HepG2 (cell line): ENCODE measurements at regions of chr14 and their contacts with region 1.

Region 1: GRCh38 chr14:36647824-36648753 is 13.6 kb upstream of the PAX9 start:
- DNase-seq: peak; percentile 61
- ATAC-seq: peak; percentile 97
- H3K4me3 ChIP-seq: peak overlapping the region; percentile 2 to 68 (median 8); a peak in 4 of 6 replicates
- H3K27ac ChIP-seq: no peak overlapping the region
- H3K4me1 ChIP-seq: peaks cover 12% of the 10 kb centered on the region
- H3K27me3 ChIP-seq: peaks cover 12 to 44% of the 10 kb centered on the region in 2 experiments
- CTCF ChIP-seq: peak; percentile 97
- EP300 ChIP-seq: no peak
- POLR2A ChIP-seq: no peak
- RAD21 ChIP-seq: peak; percentile 86

Region 2: GRCh38 chr14:36616736-36617135 is 31.4 kb before region 1 on chr14:
- CTCF ChIA-PET with region 1: no interaction called
- POLR2A ChIA-PET with region 1: no interaction called
- in situ Hi-C with region 1: no loop called
- intact Hi-C with region 1: no loop called
- DNase-seq: no peak
- ATAC-seq: peak; percentile 32; the same call in 1 of the 3 replicates
- H3K4me3 ChIP-seq: no peak overlapping the region
- H3K27ac ChIP-seq: no peak overlapping the region
- H3K4me1 ChIP-seq: no peaks in the 10 kb centered on the region; the same call in 1 of the 2 replicates
- H3K27me3 ChIP-seq: no peaks in the 10 kb centered on the region
- CTCF ChIP-seq: no peak
- EP300 ChIP-seq: no peak
- POLR2A ChIP-seq: no peak
- RAD21 ChIP-seq: no peak

Region 3: DNA sequence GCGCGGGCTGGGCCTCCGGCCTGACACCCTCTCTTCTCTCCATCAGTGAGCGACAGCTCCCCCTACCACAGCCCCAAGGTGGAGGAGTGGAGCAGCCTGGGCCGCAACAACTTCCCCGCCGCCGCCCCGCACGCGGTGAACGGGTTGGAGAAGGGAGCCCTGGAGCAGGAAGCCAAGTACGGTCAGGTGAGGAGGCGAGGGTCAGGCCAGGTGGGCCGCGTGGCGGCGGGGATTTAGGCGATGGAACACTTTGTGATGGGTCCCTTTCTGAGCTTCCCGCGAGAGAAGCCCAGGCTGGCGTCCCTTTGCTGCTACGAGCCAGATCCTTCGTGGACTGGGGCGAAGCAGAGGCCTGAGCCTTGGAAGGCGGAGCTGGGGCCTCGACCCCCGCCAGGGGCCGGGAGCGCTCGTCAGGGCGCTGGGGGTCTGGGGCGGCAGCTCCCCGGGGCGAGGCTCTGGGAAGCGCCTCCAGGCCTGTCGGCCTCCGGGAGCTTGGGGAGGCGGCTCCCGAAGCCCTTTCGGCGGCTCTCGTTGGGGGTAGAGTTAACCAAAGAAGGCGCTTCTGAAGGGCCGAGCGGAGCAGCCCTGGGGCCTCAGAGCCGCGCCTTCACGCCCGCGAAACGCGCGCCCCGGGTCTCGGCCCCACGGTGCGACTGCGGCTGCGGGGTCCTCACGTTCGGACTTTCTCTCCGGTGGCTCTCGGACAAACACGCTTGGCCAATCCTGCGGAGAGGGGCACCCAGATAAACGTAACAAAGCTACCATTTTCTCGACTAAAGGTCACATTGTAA is 18.5 kb after region 1 on chr14:
- CTCF ChIA-PET with region 1: no interaction called
- POLR2A ChIA-PET with region 1: no interaction called
- in situ Hi-C with region 1: no loop called
- intact Hi-C with region 1: no loop called
- DNase-seq: no peak
- ATAC-seq: peak; percentile 6; the same call in 2 of the 3 replicates
- H3K4me3 ChIP-seq: no peak overlapping the region
- H3K27ac ChIP-seq: no peak overlapping the region
- H3K4me1 ChIP-seq: no peaks in the 10 kb centered on the region
- H3K27me3 ChIP-seq: peaks cover 12 to 45% of the 10 kb centered on the region in 2 experiments
- CTCF ChIP-seq: no peak
- EP300 ChIP-seq: no peak
- POLR2A ChIP-seq: no peak
- RAD21 ChIP-seq: no peak

Region 4: DNA sequence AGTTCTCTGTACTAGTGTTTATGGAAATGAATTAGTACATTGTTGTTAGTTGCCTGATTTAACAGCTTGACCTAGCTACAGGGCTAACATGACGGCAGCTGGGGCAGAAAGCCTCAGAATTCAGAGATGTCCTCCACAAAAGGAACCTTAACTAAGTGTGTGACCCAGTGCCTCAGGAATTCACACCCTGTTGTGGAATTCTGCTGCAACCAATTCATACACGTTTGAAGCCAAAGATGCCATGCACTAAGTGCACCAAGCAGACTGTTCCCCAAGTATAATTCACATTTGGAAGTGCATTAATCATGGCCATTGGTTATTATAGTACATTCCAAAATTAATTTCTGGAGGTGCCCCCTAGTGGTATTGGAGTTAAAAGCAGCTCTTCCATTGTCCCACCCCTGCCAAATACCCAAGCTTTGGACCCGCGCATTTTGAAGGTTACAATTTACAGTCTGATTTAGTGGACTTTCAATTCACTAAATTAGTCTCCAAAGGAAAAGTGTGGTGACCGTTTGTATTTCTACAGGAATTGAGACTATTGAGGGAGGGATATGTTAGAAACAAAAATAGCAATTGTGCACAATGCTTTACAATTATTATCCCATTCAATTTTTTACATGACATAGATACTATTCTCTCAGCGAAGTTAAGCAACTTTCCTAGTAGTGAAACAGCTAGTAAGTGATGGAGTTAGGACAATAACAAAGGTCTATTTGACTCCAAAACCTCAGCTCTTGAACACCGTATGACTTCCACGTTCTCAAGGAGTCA is 99.5 kb after region 1 on chr14:
- CTCF ChIA-PET with region 1: interaction called, 5 read pairs
- POLR2A ChIA-PET with region 1: no interaction called
- in situ Hi-C with region 1: no loop called
- intact Hi-C with region 1: loop called (anchors 1 kb)
- DNase-seq: peak; percentile 44
- ATAC-seq: peak; percentile 91
- H3K4me3 ChIP-seq: no peak overlapping the region
- H3K27ac ChIP-seq: no peak overlapping the region
- H3K4me1 ChIP-seq: no peaks in the 10 kb centered on the region
- H3K27me3 ChIP-seq: no peaks in the 10 kb centered on the region
- CTCF ChIP-seq: peak; percentile 60
- EP300 ChIP-seq: no peak
- POLR2A ChIP-seq: no peak
- RAD21 ChIP-seq: no peak

Region 5: DNA sequence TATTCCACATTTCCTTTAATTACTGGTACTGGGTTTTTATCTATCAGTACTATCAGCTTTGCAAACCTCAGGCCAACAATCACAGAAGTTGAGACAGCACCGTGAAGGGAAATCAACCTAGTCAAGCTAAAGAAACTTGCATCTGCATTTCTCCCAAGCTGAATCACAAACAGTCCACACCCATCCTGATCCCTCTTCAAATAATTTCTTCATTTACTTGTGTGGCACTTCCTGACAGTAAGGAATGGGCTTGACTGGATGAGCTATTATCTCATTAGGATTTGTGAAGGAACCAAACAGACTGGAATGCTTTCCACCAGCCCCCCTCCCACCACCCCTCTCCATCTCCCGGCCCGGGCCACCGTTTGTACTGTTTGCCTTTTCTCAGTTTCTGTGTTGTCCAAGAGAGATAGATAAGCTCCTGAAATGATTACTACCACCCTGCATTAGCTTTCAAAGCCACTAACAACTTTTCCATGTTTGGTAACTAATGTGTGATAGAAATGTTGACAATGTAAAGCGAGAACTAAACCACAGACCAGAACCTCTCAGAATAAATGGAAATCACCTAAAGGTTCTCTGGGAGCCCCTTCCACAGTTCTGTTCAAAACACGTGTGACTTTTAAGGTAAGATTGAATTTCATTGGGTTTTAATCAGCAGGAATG is 288.1 kb after region 1 on chr14:
- CTCF ChIA-PET with region 1: interaction called, 39 read pairs
- POLR2A ChIA-PET with region 1: no interaction called
- in situ Hi-C with region 1: loop called (anchors 5 kb)
- intact Hi-C with region 1: no loop called
- DNase-seq: no peak
- ATAC-seq: no peak
- H3K4me3 ChIP-seq: no peak overlapping the region
- H3K27ac ChIP-seq: no peak overlapping the region
- H3K4me1 ChIP-seq: no peaks in the 10 kb centered on the region
- H3K27me3 ChIP-seq: no peaks in the 10 kb centered on the region
- CTCF ChIP-seq: no peak
- EP300 ChIP-seq: no peak
- POLR2A ChIP-seq: no peak
- RAD21 ChIP-seq: no peak

Region 6: DNA sequence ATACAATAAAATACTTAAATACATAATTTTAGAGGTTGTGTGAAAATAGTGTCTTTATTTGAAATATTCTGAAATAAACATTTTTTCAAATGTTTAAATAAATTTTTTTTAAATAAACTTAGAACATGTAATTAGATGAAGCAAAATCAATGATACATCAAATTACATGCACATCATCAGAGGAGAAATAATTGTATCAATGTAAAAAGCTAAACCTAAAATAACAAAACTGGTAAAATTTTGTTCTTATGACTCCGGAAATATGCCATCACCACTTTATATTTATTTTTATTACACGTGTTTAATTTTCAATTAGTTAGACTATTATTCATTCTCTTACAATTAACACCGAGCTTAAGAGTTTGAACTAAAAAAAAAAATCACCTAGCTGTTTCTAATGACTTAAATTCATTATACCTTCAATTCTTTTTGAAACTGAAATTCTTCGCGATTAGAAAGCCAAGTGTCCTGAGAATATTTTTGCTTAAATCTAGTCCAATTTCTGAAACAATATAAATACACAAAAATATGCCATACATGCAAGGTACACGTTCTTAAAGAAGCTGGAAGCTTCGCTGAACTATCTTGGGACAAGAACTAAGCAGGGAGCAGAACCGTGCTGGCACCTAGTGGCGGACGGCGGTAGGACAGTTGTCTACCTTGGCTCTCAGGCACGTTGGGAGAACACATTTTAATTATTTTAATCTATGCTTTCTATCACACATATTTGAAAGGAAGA is 293.9 kb after region 1 on chr14:
- CTCF ChIA-PET with region 1: interaction called, 39 read pairs
- POLR2A ChIA-PET with region 1: no interaction called
- in situ Hi-C with region 1: loop called (anchors 5 kb)
- intact Hi-C with region 1: loop called (anchors 1 kb)
- DNase-seq: peak; percentile 62
- ATAC-seq: peak; percentile 98
- H3K4me3 ChIP-seq: no peak overlapping the region
- H3K27ac ChIP-seq: no peak overlapping the region
- H3K4me1 ChIP-seq: no peaks in the 10 kb centered on the region
- H3K27me3 ChIP-seq: no peaks in the 10 kb centered on the region
- CTCF ChIP-seq: peak; percentile 97
- EP300 ChIP-seq: no peak
- POLR2A ChIP-seq: no peak
- RAD21 ChIP-seq: peak; percentile 84

Region 7: DNA sequence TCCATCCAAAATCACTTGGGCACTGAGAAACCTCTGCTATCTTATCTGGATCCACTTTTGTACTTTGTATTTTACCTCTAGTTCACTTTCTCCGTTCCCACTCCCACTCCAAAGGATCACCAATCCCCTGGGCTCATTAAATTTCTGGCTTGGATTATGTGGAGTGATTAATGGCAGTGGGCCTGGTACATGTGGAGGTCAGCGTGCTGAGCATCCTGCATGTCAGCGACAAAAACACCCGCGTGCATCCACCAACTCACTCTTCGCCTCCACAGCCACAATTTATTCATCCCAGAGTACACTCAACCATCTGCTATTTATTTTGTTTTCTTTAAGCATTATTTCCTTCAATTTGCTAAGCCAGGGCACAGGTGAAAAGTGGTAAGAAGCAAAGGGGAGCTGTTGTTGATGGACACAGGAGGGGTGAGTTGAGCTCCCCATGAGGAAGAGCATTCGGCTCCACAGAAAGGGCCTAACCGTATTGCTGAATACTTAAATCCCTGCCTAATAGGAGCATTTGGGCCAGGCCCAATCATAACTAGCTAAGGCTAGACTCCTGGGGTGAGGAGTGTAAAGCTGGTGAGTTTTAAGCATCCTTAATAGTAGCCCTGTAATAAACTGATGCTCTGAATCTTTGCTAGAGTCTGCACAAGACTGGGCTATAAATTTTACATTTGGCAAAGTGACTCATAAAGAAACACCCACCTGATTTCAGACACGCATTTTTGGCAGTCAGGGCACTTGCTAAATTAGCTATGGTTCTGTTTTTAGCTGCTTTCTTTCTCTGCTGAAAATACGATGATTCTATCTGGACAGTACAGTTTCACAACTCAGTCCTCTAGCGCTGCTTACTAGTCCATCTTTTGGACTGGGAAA is 386.6 kb after region 1 on chr14:
- CTCF ChIA-PET with region 1: no interaction called
- POLR2A ChIA-PET with region 1: no interaction called
- in situ Hi-C with region 1: no loop called
- intact Hi-C with region 1: loop called (anchors 5 kb)
- DNase-seq: no peak
- ATAC-seq: no peak
- H3K4me3 ChIP-seq: no peak overlapping the region
- H3K27ac ChIP-seq: no peak overlapping the region
- H3K4me1 ChIP-seq: peaks cover 27% of the 10 kb centered on the region
- H3K27me3 ChIP-seq: no peaks in the 10 kb centered on the region
- CTCF ChIP-seq: no peak
- EP300 ChIP-seq: no peak
- POLR2A ChIP-seq: no peak
- RAD21 ChIP-seq: no peak

Region 8: GRCh38 chr14:37150414-37150813 is 502.3 kb after region 1 on chr14:
- CTCF ChIA-PET with region 1: interaction called, 19 read pairs
- POLR2A ChIA-PET with region 1: no interaction called
- in situ Hi-C with region 1: loop called (anchors 5 kb)
- intact Hi-C with region 1: loop called (anchors 1 kb)
- DNase-seq: peak; percentile 63
- ATAC-seq: peak; percentile 75
- H3K4me3 ChIP-seq: no peak overlapping the region
- H3K27ac ChIP-seq: no peak overlapping the region
- H3K4me1 ChIP-seq: no peaks in the 10 kb centered on the region
- H3K27me3 ChIP-seq: no peaks in the 10 kb centered on the region
- CTCF ChIP-seq: peak; percentile 78
- EP300 ChIP-seq: no peak
- POLR2A ChIP-seq: no peak
- RAD21 ChIP-seq: no peak